T-cell (primary cell): ENCODE measurements at regions of chr2 and their contacts with region 1.

Region 1: DNA sequence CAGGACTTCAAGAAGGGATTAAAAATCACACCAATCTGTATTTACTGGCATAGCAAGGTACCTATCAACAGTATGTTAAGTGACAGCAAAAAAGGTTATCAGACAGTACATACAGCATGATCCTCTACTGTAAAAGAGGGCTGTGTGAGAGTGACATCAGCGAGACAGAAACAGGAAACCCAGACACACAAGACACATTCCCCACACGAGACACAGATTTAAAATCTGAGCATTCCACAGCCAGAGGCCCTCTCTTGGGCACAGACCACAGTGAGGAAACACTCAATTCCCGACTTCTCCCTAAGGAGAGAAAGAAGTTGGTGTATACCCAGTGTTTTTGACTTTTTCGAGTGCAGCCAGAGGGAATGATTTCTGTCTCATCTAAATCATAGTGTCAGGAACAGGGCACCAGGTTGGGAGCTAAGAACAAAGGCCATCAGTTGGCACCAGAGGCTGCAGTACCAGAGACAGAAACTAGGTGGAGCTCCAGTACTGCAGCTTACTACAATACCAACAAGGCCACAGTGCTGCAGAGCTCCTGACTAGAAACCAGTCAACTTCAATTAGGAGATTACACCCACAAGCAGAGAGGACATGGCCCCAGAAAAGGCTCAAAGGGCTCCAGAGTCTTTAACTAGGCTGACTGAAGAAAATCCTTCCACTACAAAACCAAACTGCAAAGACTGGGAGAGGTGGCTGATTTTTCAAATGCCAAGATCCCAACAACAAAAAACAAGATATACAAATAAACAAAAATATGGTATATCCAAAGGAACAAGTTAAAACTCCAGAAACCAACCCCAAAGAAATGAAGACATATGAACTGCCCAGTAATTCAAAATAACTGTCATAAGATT is 41.0 kb downstream of the UNC50 start:
- DNase-seq: peak; percentile 58 to 92 (median 77)
- ATAC-seq: peak; percentile 91 to 95 (median 93)
- H3K4me3 ChIP-seq: no peak overlapping the region
- H3K4me3 Mint-ChIP-seq: peak overlapping the region; percentile 1 to 39 (median 13)
- H3K27ac ChIP-seq: peak overlapping the region; percentile 31
- H3K27ac Mint-ChIP-seq: peak overlapping the region; percentile 88 to 92
- H3K4me1 ChIP-seq: peaks cover 25 to 28% of the 10 kb centered on the region in 2 experiments
- H3K4me1 Mint-ChIP-seq: peaks cover 55 to 71% (median 60%) of the 10 kb centered on the region in 3 donors
- H3K27me3 ChIP-seq: no peaks in the 10 kb centered on the region
- H3K27me3 Mint-ChIP-seq: no peaks in the 10 kb centered on the region

Region 2: GRCh38 chr2:98664327-98664726 is 15.0 kb after region 1 on chr2:
- CTCF ChIA-PET with region 1: interaction called, 3 to 12 read pairs
- POLR2A ChIA-PET with region 1: no interaction called
- DNase-seq: peak in 33 of 35 experiments; percentile 26 to 88 (median 60)
- ATAC-seq: peak; percentile 77 to 83 (median 80)
- H3K4me3 ChIP-seq: peak overlapping the region; percentile 15 to 49
- H3K4me3 Mint-ChIP-seq: peak overlapping the region; percentile 71 to 92 (median 78)
- H3K27ac ChIP-seq: peak overlapping the region; percentile 92
- H3K27ac Mint-ChIP-seq: peak overlapping the region; percentile 97 to 98
- H3K4me1 ChIP-seq: peaks cover 40 to 45% of the 10 kb centered on the region in 2 experiments
- H3K4me1 Mint-ChIP-seq: peaks cover 78 to 83% (median 82%) of the 10 kb centered on the region in 3 donors
- H3K27me3 ChIP-seq: no peaks in the 10 kb centered on the region
- H3K27me3 Mint-ChIP-seq: no peaks in the 10 kb centered on the region

Region 3: GRCh38 chr2:98709535-98709934 is 60.2 kb after region 1 on chr2:
- CTCF ChIA-PET with region 1: interaction called, 3 to 10 read pairs
- POLR2A ChIA-PET with region 1: interaction called in 1 of 2 experiments, 5 read pairs
- DNase-seq: no peak
- ATAC-seq: no peak
- H3K4me3 ChIP-seq: no peak overlapping the region
- H3K4me3 Mint-ChIP-seq: peak overlapping the region; percentile 18 to 76 (median 58)
- H3K27ac ChIP-seq: peak overlapping the region; percentile 41
- H3K27ac Mint-ChIP-seq: peak overlapping the region; percentile 78 to 79
- H3K4me1 ChIP-seq: peaks cover 58 to 72% of the 10 kb centered on the region in 2 experiments
- H3K4me1 Mint-ChIP-seq: peaks cover 85 to 90% (median 89%) of the 10 kb centered on the region in 3 donors
- H3K27me3 ChIP-seq: no peaks in the 10 kb centered on the region
- H3K27me3 Mint-ChIP-seq: no peaks in the 10 kb centered on the region

Region 4: GRCh38 chr2:98731041-98731893 is 81.9 kb after region 1 on chr2 and contains the start of gene MGAT4A:
- CTCF ChIA-PET with region 1: interaction called in 1 of 2 experiments, 12 read pairs
- POLR2A ChIA-PET with region 1: interaction called in 1 of 2 experiments, 3 read pairs
- DNase-seq: peak; percentile 66 to 88 (median 78)
- ATAC-seq: peak; percentile 82 to 87 (median 84)
- H3K4me3 ChIP-seq: peak within 1 kb of the TSS; percentile 84 to 91
- H3K4me3 Mint-ChIP-seq: peak within 1 kb of the TSS; percentile 92 to 94 (median 93)
- H3K27ac ChIP-seq: peak within 1 kb of the TSS; percentile 59
- H3K27ac Mint-ChIP-seq: peak within 1 kb of the TSS; percentile 96 to 97
- H3K4me1 ChIP-seq: peaks cover 40 to 50% of the 10 kb centered on the region in 2 experiments
- H3K4me1 Mint-ChIP-seq: peaks cover 66 to 79% (median 68%) of the 10 kb centered on the region in 3 donors
- H3K27me3 ChIP-seq: no peaks in the 10 kb centered on the region
- H3K27me3 Mint-ChIP-seq: no peaks in the 10 kb centered on the region
- total RNA-seq, gene MGAT4A: 185 to 220 (median 199) TPM

Region 5: DNA sequence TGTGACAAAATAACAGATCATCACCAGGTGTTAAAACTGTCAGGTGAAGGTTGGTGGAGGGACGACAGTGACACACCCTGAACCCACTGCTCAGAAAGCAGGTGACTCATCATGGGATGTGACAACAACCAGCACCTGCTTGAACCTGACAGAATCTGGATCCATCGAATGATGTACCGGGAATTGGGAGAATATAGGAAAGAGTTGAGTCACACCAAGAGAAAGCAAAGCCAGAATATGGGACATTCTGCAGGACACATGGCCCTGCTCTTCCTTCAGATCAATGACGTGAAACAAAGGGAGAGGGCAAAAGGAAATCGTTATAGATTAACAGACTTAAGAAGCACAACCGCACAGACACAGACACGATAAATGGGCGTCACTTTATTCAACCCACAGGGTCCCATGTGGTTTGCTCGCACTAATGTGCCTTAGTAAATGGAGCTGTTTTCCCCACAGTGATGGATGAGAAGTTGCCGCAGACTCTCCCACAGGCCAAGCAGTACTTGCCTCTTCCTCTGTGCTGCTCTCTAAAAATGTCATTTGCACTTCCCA is 186.5 kb after region 1 on chr2:
- CTCF ChIA-PET with region 1: interaction called, 5 to 47 read pairs
- POLR2A ChIA-PET with region 1: no interaction called
- DNase-seq: peak; percentile 25 to 83 (median 58)
- ATAC-seq: peak; percentile 87 to 90 (median 89)
- H3K4me3 ChIP-seq: peak overlapping the region in 1 of 2 donors; percentile 15
- H3K4me3 Mint-ChIP-seq: peak overlapping the region; percentile 4 to 67 (median 39)
- H3K27ac ChIP-seq: peak overlapping the region; percentile 81
- H3K27ac Mint-ChIP-seq: peak overlapping the region; percentile 81 to 94
- H3K4me1 ChIP-seq: peaks cover 10 to 44% of the 10 kb centered on the region in 2 experiments
- H3K4me1 Mint-ChIP-seq: peaks cover 33 to 57% (median 45%) of the 10 kb centered on the region in 3 donors
- H3K27me3 ChIP-seq: no peaks in the 10 kb centered on the region
- H3K27me3 Mint-ChIP-seq: no peaks in the 10 kb centered on the region

Region 6: DNA sequence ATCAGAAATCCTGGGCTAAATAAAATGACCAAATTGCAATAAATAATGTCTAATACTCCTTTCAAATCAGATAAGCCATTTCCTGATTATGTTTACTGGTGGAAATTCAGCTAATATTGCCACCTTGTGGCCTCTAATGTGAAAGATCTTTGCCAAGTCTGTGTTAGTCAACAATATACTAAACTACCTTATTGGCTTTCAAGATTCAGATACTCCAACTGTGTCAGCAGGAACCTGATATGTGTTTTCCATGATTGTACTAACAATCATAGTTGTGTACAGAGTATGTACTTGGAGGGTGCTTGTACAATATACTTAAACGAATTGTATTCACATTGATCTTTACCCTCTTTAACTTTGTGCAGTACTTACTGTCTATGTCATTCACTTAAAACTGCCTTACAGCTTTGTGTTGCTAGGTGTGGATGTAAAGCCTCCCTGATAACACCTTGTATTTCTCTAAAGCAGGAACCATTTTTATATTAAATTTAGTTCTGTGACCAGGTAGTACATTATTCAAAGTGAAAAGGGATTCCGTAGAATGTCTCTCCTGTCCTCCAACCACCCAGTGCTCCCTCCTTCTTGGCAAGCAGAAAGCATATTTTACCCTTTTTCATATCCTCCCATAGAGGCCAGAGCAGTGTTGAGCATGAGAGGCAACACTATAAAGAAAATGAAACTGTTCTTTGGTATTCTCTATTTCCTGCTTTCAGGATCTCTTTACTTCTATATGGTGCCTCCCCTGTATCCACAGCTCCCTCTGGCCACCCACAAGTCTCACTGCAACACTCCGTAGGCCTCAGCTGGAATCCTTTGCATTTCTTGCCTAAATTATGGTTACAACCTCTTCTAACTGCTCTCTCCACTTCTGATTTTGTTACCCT is 417.0 kb after region 1 on chr2:
- CTCF ChIA-PET with region 1: interaction called in 1 of 2 experiments, 15 read pairs
- POLR2A ChIA-PET with region 1: no interaction called
- DNase-seq: peak in 11 of 35 experiments; percentile 3 to 71 (median 13)
- ATAC-seq: peak; percentile 78 to 99 (median 90)
- H3K4me3 ChIP-seq: no peak overlapping the region
- H3K4me3 Mint-ChIP-seq: no peak overlapping the region
- H3K27ac ChIP-seq: no peak overlapping the region
- H3K27ac Mint-ChIP-seq: no peak overlapping the region
- H3K4me1 ChIP-seq: peaks cover 4 to 17% of the 10 kb centered on the region in 2 experiments
- H3K4me1 Mint-ChIP-seq: peaks cover 0 to 8% (median 2%) of the 10 kb centered on the region in 3 donors
- H3K27me3 ChIP-seq: no peaks in the 10 kb centered on the region
- H3K27me3 Mint-ChIP-seq: no peaks in the 10 kb centered on the region